ENCODE measurements at regions of chr14 and their contacts with region 1.

Region 1: GRCh38 chr14:57963071-57963470 is 97.2 kb upstream of the SLC35F4 start:
- DNase-seq: no peak
- ATAC-seq: no peak
- H3K4me3 ChIP-seq: no peak overlapping the region
- H3K27ac ChIP-seq: no peak overlapping the region
- H3K4me1 ChIP-seq: no peaks in the 10 kb centered on the region
- H3K27me3 ChIP-seq: no peaks in the 10 kb centered on the region
- CTCF ChIP-seq: no peak

Region 2: GRCh38 chr14:57871459-57872080 is 91.5 kb before region 1 on chr14:
- CTCF ChIA-PET with region 1: interaction called, 15 read pairs
- POLR2A ChIA-PET with region 1: no interaction called
- in situ Hi-C with region 1: no loop called
- intact Hi-C with region 1: no loop called
- DNase-seq: peak; percentile 43
- ATAC-seq: peak; percentile 78
- H3K4me3 ChIP-seq: no peak overlapping the region
- H3K27ac ChIP-seq: no peak overlapping the region; the same call in 1 of the 2 replicates
- H3K4me1 ChIP-seq: peaks cover 18% of the 10 kb centered on the region
- H3K27me3 ChIP-seq: no peaks in the 10 kb centered on the region
- CTCF ChIP-seq: peak; percentile 72